ENCODE measurements at regions of chr1 and their contacts with region 1.

Region 1: DNA sequence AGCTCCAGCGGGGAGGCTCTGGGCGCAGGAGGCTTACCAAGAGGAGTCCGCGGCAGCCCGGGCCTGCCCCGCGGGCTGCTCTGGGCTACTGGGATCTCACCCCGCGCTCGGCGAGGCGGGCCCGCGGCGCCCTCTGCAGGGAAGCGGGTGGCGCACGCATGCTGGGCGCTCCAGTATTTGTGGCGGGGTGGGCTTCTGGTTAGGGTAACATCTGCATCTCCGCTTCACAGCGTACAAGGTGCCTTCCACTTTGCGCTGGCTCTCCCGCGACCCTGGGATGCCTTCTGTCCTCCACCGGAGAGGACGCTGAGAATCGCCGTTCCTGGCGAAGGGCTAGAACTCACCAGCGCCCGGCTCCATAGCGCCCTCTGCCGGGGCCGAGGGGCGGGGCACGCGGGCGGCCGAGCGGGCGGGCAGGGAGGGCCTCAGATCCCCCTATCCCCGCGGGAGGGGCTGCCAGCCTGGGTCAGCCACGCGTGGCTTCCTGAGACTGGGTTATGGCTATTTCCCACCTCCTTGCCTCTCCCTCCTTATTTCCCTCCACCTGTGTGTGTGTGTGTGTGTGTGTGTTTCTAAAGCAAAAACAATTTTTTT is 46.6 kb upstream of the CTBS start:
- DNase-seq: peak; percentile 63 to 91 (median 77)
- ATAC-seq: peak; percentile 91
- H3K4me3 ChIP-seq: peak overlapping the region; percentile 62 to 93
- H3K4me3 Mint-ChIP-seq: peak overlapping the region; percentile 91
- H3K27ac ChIP-seq: peak overlapping the region in 1 of 2 experiments; percentile 35
- H3K27ac Mint-ChIP-seq: peak overlapping the region; percentile 14
- H3K4me1 ChIP-seq: peaks cover 4% of the 10 kb centered on the region
- H3K4me1 Mint-ChIP-seq: peaks cover 2% of the 10 kb centered on the region
- H3K27me3 ChIP-seq: no peaks in the 10 kb centered on the region
- H3K27me3 Mint-ChIP-seq: peaks cover 5% of the 10 kb centered on the region
- CTCF ChIP-seq: peak; percentile 100

Region 2: DNA sequence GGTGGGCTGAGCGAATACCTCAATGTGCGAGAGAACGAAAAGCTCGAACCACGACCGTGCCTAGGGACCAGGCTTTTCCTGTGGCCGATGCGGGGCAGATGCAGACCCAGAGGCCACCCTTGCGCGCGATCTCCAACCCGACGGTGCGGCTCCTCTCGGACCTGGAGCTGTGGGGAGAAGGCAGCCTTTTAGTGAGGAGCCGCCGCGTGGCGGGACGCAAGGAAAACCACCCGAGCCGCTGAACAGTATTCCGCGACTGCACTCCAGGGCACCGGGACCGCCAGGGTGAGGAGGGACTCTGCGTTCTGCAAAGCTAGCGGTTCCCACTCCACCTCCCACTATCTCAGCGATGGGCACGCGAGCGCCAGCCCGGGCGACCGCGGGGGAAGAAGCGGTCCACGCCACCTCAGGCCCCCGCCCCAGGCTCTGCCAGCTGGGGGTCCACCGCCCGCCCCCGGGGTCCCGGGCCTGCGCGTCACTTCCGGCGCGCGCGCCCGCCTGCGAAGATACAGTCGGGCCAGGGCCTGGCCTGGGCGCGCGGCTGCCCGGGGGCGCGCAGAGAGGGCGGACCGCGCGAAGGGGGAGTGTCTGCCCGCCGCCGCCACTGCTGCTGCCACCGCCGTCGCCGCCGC is 543.2 kb before region 1 on chr1:
- CTCF ChIA-PET with region 1: no interaction called
- POLR2A ChIA-PET with region 1: no interaction called
- intact Hi-C with region 1: loop called in 1 of 2 experiments (anchors 5 kb)
- DNase-seq: peak; percentile 48 to 88 (median 74)
- ATAC-seq: peak; percentile 89
- H3K4me3 ChIP-seq: peak overlapping the region; percentile 90 to 91
- H3K4me3 Mint-ChIP-seq: peak overlapping the region; percentile 87
- H3K27ac ChIP-seq: peak overlapping the region; percentile 72 to 76
- H3K27ac Mint-ChIP-seq: peak overlapping the region; percentile 86
- H3K4me1 ChIP-seq: peaks cover 14% of the 10 kb centered on the region
- H3K4me1 Mint-ChIP-seq: peaks cover 13% of the 10 kb centered on the region
- H3K27me3 ChIP-seq: no peaks in the 10 kb centered on the region
- H3K27me3 Mint-ChIP-seq: no peaks in the 10 kb centered on the region
- CTCF ChIP-seq: no peak

Region 3: GRCh38 chr1:84433258-84434080 is 187.3 kb before region 1 on chr1:
- CTCF ChIA-PET with region 1: interaction called, 44 read pairs
- POLR2A ChIA-PET with region 1: no interaction called
- intact Hi-C with region 1: loop called in 1 of 2 experiments (anchors 2 kb)
- DNase-seq: peak; percentile 31 to 92 (median 53)
- ATAC-seq: peak; percentile 73
- H3K4me3 ChIP-seq: peak overlapping the region; percentile 34 to 46
- H3K4me3 Mint-ChIP-seq: peak overlapping the region; percentile 76
- H3K27ac ChIP-seq: peak overlapping the region; percentile 73 to 76
- H3K27ac Mint-ChIP-seq: peak overlapping the region; percentile 75
- H3K4me1 ChIP-seq: peaks cover 49% of the 10 kb centered on the region
- H3K4me1 Mint-ChIP-seq: peaks cover 9% of the 10 kb centered on the region
- H3K27me3 ChIP-seq: no peaks in the 10 kb centered on the region
- H3K27me3 Mint-ChIP-seq: no peaks in the 10 kb centered on the region
- CTCF ChIP-seq: peak; percentile 65

Region 4: DNA sequence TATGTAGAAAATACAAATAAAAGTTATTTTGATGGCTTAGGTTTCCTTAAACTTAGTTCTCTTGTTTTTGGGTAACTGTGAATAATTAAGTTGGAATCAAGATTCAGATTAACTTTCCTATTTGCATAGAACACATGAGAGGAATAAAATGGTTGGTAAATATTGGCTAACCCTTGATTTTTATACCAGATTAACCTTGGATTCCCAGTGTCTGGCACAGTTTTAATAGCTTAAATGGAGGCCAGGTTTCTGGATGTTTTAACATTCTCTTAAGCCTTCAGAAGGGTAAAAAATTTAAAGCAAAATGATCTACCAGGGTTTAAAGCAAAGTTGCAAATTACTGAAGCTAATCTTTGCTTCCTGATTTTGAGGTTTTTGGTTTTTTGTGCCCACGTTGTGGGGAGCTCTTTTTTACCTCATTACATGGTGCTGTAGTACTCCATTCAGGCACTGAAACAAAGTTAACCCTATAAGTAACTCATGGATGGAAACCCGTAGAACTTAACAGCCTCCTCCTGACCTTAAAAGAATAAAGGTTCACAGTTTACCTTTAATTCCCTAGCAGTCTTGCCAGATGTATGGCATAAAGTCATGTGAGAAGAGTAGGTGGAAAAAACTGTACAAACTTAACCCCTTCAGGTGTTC is 123.1 kb before region 1 on chr1:
- CTCF ChIA-PET with region 1: interaction called, 3 read pairs
- POLR2A ChIA-PET with region 1: no interaction called
- intact Hi-C with region 1: loop called in 1 of 2 experiments (anchors 5 kb)
- DNase-seq: peak in 1 of 9 experiments; percentile 30
- ATAC-seq: peak; percentile 71
- H3K4me3 ChIP-seq: no peak overlapping the region
- H3K4me3 Mint-ChIP-seq: no peak overlapping the region
- H3K27ac ChIP-seq: no peak overlapping the region
- H3K27ac Mint-ChIP-seq: peak overlapping the region; percentile 49
- H3K4me1 ChIP-seq: peaks cover 24% of the 10 kb centered on the region
- H3K4me1 Mint-ChIP-seq: peaks cover 41% of the 10 kb centered on the region
- H3K27me3 ChIP-seq: no peaks in the 10 kb centered on the region
- H3K27me3 Mint-ChIP-seq: no peaks in the 10 kb centered on the region
- CTCF ChIP-seq: no peak

Region 5: GRCh38 chr1:84573967-84574842 is 46.6 kb before region 1 on chr1 and contains the start of gene CTBS:
- CTCF ChIA-PET with region 1: interaction called, 8 read pairs
- POLR2A ChIA-PET with region 1: no interaction called
- intact Hi-C with region 1: loop called (anchors 2 kb)
- DNase-seq: peak; percentile 67 to 93 (median 85)
- ATAC-seq: peak; percentile 91
- H3K4me3 ChIP-seq: peak within 1 kb of the TSS; percentile 81 to 92
- H3K4me3 Mint-ChIP-seq: peak within 1 kb of the TSS; percentile 96
- H3K27ac ChIP-seq: peak within 1 kb of the TSS; percentile 94 to 96
- H3K27ac Mint-ChIP-seq: peak within 1 kb of the TSS; percentile 99
- H3K4me1 ChIP-seq: peaks cover 20% of the 10 kb centered on the region
- H3K4me1 Mint-ChIP-seq: peaks cover 42% of the 10 kb centered on the region
- H3K27me3 ChIP-seq: no peaks in the 10 kb centered on the region
- H3K27me3 Mint-ChIP-seq: no peaks in the 10 kb centered on the region
- CTCF ChIP-seq: no peak
- total RNA-seq, gene CTBS: 17.3 to 19.7 TPM

Region 6: DNA sequence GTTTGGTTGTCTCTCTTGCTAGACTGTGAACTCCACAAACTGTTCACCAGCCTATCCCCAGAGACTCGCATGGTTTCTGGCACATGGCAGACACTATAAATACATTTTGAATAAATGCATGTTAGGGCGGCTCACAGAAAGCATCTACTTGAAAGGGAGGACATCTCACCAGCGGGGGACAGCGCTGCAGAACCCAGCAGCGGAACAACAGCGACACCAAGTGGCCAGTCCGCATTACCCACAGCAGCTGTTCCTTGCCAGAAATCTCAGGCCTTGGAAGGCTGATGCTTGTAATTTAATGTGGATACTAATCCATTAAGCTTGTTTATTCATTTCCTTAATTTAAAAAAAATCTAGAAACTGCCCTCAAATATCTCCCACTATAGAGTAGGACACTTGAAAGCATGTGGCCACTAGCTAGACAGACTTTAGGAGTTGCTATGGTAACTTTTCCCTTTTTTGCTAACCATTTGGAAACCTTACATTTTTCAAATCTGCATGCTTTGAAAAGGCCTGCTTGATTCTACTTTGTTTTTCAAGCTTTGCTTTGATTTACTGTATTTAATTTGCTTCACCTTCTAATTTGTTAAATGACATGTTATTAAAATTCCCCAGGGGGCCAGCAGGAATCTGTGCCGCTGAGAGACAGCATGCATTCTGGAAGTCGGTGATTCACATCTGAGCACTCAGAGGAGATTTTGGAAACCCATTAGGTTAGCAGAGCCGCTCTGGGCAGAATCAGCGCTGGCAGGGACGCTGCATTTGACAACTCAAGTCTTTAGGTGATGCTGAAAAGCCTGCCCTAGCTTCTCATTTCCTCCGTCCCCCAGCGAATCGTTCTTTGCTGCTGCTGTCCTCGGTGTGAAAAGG is 132.9 kb after region 1 on chr1:
- CTCF ChIA-PET with region 1: interaction called, 7 read pairs
- POLR2A ChIA-PET with region 1: no interaction called
- intact Hi-C with region 1: loop called (anchors 2 to 5 kb)
- DNase-seq: peak; percentile 56 to 86 (median 73)
- ATAC-seq: peak; percentile 93
- H3K4me3 ChIP-seq: no peak overlapping the region
- H3K4me3 Mint-ChIP-seq: no peak overlapping the region
- H3K27ac ChIP-seq: no peak overlapping the region
- H3K27ac Mint-ChIP-seq: no peak overlapping the region
- H3K4me1 ChIP-seq: no peaks in the 10 kb centered on the region
- H3K4me1 Mint-ChIP-seq: no peaks in the 10 kb centered on the region
- H3K27me3 ChIP-seq: no peaks in the 10 kb centered on the region
- H3K27me3 Mint-ChIP-seq: peaks cover 19% of the 10 kb centered on the region
- CTCF ChIP-seq: peak; percentile 94

Region 7: GRCh38 chr1:84936116-84936810 is 315.4 kb after region 1 on chr1:
- CTCF ChIA-PET with region 1: no interaction called
- POLR2A ChIA-PET with region 1: no interaction called
- intact Hi-C with region 1: loop called (anchors 1 to 2 kb)
- DNase-seq: peak in 7 of 9 experiments; percentile 10 to 79 (median 35)
- ATAC-seq: peak; percentile 73
- H3K4me3 ChIP-seq: no peak overlapping the region
- H3K4me3 Mint-ChIP-seq: no peak overlapping the region
- H3K27ac ChIP-seq: no peak overlapping the region
- H3K27ac Mint-ChIP-seq: no peak overlapping the region
- H3K4me1 ChIP-seq: peaks cover 5% of the 10 kb centered on the region
- H3K4me1 Mint-ChIP-seq: peaks cover 4% of the 10 kb centered on the region
- H3K27me3 ChIP-seq: no peaks in the 10 kb centered on the region
- H3K27me3 Mint-ChIP-seq: no peaks in the 10 kb centered on the region
- CTCF ChIP-seq: peak; percentile 98

Measured in CD8-positive, alpha-beta T cell (primary cell).